Caco-2 (cell line): ENCODE measurements at regions of chr7 and their contacts with region 1.

Region 1: DNA sequence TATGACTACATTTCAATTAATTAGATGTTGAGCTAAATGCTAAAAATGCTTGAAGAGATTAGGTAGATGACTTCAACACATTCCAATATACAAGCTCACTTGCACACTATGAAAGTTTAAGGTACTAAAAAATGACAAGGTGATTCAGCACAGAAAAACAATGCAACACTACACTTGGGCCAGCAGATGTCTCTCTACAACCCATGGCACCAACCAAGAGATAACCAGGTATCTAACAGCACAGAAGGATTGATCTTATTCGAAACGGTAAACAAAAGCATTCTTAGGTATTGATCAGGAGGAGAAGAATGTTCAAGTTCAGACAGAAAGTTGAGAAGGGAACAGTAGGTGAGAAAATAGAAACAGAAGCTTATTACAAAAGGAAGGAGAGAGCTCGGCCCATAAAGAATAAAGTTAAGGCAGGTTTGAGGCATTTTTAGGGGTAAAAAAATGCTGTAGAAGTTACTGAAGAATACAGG is 248.2 kb upstream of the KLF14 start:
- DNase-seq: peak in 1 of 2 experiments; percentile 43
- H3K4me3 ChIP-seq: no peak overlapping the region
- H3K4me3 Mint-ChIP-seq: no peak overlapping the region
- H3K27ac Mint-ChIP-seq: no peak overlapping the region
- H3K4me1 ChIP-seq: peaks cover 23% of the 10 kb centered on the region
- H3K4me1 Mint-ChIP-seq: peaks cover 10% of the 10 kb centered on the region
- H3K27me3 ChIP-seq: no peaks in the 10 kb centered on the region
- H3K27me3 Mint-ChIP-seq: no peaks in the 10 kb centered on the region
- CTCF ChIP-seq: peak; percentile 51 to 79

Region 2: DNA sequence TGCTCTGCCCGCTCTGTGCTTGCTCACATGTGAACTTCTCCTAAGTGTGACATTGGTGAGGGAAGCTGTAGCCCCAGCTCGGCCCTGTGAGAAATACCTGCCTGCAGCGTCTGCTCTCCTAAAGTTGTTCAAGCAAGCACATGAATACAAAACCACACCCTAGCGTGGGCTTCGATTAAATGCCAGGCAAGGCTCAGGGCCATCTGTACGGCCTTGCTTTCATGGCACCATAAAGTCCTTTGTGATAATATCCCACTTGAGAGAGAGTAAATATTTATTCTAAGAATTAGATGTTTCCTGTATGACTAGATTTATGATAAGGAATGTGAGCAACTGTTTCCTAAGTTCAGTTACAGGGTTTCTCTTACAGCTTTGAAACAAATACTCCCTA is 14.6 kb after region 1 on chr7:
- CTCF ChIA-PET with region 1: interaction called, 10 read pairs
- POLR2A ChIA-PET with region 1: no interaction called
- intact Hi-C with region 1: no loop called
- DNase-seq: peak; percentile 78 to 89
- H3K4me3 ChIP-seq: no peak overlapping the region
- H3K4me3 Mint-ChIP-seq: peak overlapping the region; percentile 50
- H3K27ac Mint-ChIP-seq: peak overlapping the region; percentile 80
- H3K4me1 ChIP-seq: peaks cover 59% of the 10 kb centered on the region
- H3K4me1 Mint-ChIP-seq: peaks cover 54% of the 10 kb centered on the region
- H3K27me3 ChIP-seq: no peaks in the 10 kb centered on the region
- H3K27me3 Mint-ChIP-seq: no peaks in the 10 kb centered on the region
- CTCF ChIP-seq: no peak

Region 3: GRCh38 chr7:131007394-131008330 is 25.5 kb after region 1 on chr7:
- CTCF ChIA-PET with region 1: interaction called, 10 read pairs
- POLR2A ChIA-PET with region 1: no interaction called
- intact Hi-C with region 1: loop called (anchors 1 kb)
- DNase-seq: peak; percentile 80 to 81
- H3K4me3 ChIP-seq: no peak overlapping the region
- H3K4me3 Mint-ChIP-seq: no peak overlapping the region
- H3K27ac Mint-ChIP-seq: peak overlapping the region; percentile 18
- H3K4me1 ChIP-seq: peaks cover 8% of the 10 kb centered on the region; the same call in 1 of the 2 replicates
- H3K4me1 Mint-ChIP-seq: no peaks in the 10 kb centered on the region
- H3K27me3 ChIP-seq: no peaks in the 10 kb centered on the region
- H3K27me3 Mint-ChIP-seq: no peaks in the 10 kb centered on the region
- CTCF ChIP-seq: peak; percentile 53 to 57